ENCODE measurements at regions of chr1 and their contacts with region 1.

Region 1: GRCh38 chr1:113928941-113929749 is at the start of gene HIPK1:
- DNase-seq: peak; percentile 96
- H3K4me3 ChIP-seq: peak within 1 kb of the TSS; percentile 96
- H3K27ac ChIP-seq: peak within 1 kb of the TSS; percentile 75
- H3K4me1 ChIP-seq: peaks cover 51% of the 10 kb centered on the region
- CTCF ChIP-seq: no peak
- total RNA-seq, gene HIPK1: 17.3 and 20.4 TPM in 2 replicates

Region 2: GRCh38 chr1:113871597-113872113 is 57.5 kb before region 1 on chr1 and contains the start of gene PTPN22:
- CTCF ChIA-PET with region 1: no interaction called
- POLR2A ChIA-PET with region 1: interaction called, 4 read pairs
- intact Hi-C with region 1: loop called (anchors 1 kb)
- DNase-seq: peak; percentile 91
- H3K4me3 ChIP-seq: peak within 1 kb of the TSS; percentile 77
- H3K27ac ChIP-seq: peak within 1 kb of the TSS; percentile 93
- H3K4me1 ChIP-seq: peaks cover 62% of the 10 kb centered on the region
- CTCF ChIP-seq: no peak
- total RNA-seq, gene PTPN22: 27.5 and 29.4 TPM in 2 replicates

Region 3: DNA sequence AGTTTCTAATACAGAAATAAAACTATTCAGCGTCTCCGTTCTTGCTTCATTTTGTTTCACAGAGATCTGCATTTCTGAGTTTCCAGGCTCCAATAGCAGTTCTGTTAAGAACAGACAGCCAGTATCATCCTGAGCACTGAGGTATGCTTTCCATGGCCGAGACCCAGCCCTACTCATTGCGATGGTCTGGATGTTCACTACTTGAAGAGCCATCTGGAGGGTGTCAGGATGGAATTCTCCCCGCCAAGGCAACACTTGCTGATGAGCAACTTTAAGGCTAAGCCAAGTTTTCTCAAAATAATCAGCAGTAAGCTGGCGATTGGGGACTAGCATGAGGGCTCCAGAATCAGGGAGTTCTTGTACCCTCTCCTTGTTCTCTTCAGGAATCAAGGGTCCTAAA is 34.0 kb before region 1 on chr1:
- CTCF ChIA-PET with region 1: no interaction called
- POLR2A ChIA-PET with region 1: no interaction called
- intact Hi-C with region 1: no loop called
- DNase-seq: no peak
- H3K4me3 ChIP-seq: no peak overlapping the region
- H3K27ac ChIP-seq: no peak overlapping the region
- H3K4me1 ChIP-seq: no peaks in the 10 kb centered on the region
- CTCF ChIP-seq: no peak

Region 4: GRCh38 chr1:113912594-113913311 is 16.4 kb before region 1 on chr1:
- CTCF ChIA-PET with region 1: interaction called, 3 read pairs
- POLR2A ChIA-PET with region 1: interaction called, 11 read pairs
- intact Hi-C with region 1: no loop called
- DNase-seq: no peak
- H3K4me3 ChIP-seq: no peak overlapping the region
- H3K27ac ChIP-seq: no peak overlapping the region
- H3K4me1 ChIP-seq: peaks cover 2% of the 10 kb centered on the region
- CTCF ChIP-seq: no peak

Region 5: GRCh38 chr1:113949007-113949406 is 19.9 kb after region 1 on chr1:
- CTCF ChIA-PET with region 1: interaction called, 3 read pairs
- POLR2A ChIA-PET with region 1: interaction called, 29 read pairs
- intact Hi-C with region 1: loop called (anchors 1 kb)
- DNase-seq: no peak
- H3K4me3 ChIP-seq: no peak overlapping the region
- H3K27ac ChIP-seq: no peak overlapping the region
- H3K4me1 ChIP-seq: peaks cover 48% of the 10 kb centered on the region
- CTCF ChIP-seq: peak; percentile 46

Measured in OCI-LY7 (cell line).